GM12878 (cell line): ENCODE measurements at regions of chrX and their contacts with region 1.

Region 1: DNA sequence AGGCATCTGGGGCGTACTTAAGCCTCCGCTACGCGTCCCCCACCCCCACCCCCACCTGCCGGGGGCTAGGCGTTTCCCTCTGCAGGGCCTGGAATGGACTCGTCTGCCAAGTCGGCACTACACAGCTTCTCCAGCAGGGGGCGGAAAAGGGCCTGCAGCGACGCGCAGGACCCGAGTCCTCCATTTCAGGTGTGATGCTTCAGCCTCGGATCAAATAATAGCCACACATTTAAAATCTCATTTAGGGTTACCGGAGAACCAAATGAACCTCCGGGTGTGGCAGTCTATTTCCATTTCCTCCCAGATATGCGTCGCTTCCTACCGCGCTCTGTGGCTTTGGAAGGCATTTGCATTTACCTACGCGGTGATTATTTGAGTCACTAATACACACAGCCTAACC is 2.9 kb downstream of the PAK3 start:
- DNase-seq: no peak
- ATAC-seq: peak; percentile 88
- H3K4me3 ChIP-seq: no peak overlapping the region
- H3K27ac ChIP-seq: no peak overlapping the region
- H3K4me1 ChIP-seq: no peaks in the 10 kb centered on the region
- H3K27me3 ChIP-seq: peaks cover 0 to 3% of the 10 kb centered on the region in 2 experiments; a peak in 1 of 4 replicates
- CTCF ChIP-seq: peak; percentile 68 to 87 (median 73)
- EP300 ChIP-seq: no peak
- POLR2A ChIP-seq: no peak
- RAD21 ChIP-seq: peak; percentile 64

Region 2: GRCh38 chrX:110992611-110993010 is 106.3 kb before region 1 on chrX:
- CTCF ChIA-PET with region 1: interaction called, 7 read pairs
- POLR2A ChIA-PET with region 1: no interaction called
- RAD21 ChIA-PET with region 1: no interaction called
- SMC1A ChIA-PET with region 1: interaction called, 3 read pairs
- in situ Hi-C with region 1: no loop called
- intact Hi-C with region 1: loop called (anchors 5 kb)
- DNase-seq: no peak
- ATAC-seq: peak; percentile 76
- H3K4me3 ChIP-seq: no peak overlapping the region
- H3K27ac ChIP-seq: no peak overlapping the region
- H3K4me1 ChIP-seq: no peaks in the 10 kb centered on the region
- H3K27me3 ChIP-seq: no peaks in the 10 kb centered on the region
- CTCF ChIP-seq: peak; percentile 49 to 61 (median 56)
- EP300 ChIP-seq: no peak
- POLR2A ChIP-seq: no peak
- RAD21 ChIP-seq: peak; percentile 40; the same call in 1 of the 2 replicates

Region 3: GRCh38 chrX:111114801-111115200 is 15.9 kb after region 1 on chrX:
- CTCF ChIA-PET with region 1: interaction called, 20 read pairs
- POLR2A ChIA-PET with region 1: no interaction called
- RAD21 ChIA-PET with region 1: interaction called, 4 read pairs
- SMC1A ChIA-PET with region 1: interaction called, 6 read pairs
- in situ Hi-C with region 1: no loop called
- intact Hi-C with region 1: no loop called
- DNase-seq: no peak
- ATAC-seq: peak; percentile 79
- H3K4me3 ChIP-seq: no peak overlapping the region
- H3K27ac ChIP-seq: no peak overlapping the region
- H3K4me1 ChIP-seq: no peaks in the 10 kb centered on the region
- H3K27me3 ChIP-seq: no peaks in the 10 kb centered on the region; a peak in 1 of 4 replicates
- CTCF ChIP-seq: no peak
- EP300 ChIP-seq: no peak
- POLR2A ChIP-seq: no peak
- RAD21 ChIP-seq: no peak